Left ventricle myocardium inferior (tissue), 1 donor: ENCODE measurements at regions of chr19 and their contacts with region 1.

Region 1: DNA sequence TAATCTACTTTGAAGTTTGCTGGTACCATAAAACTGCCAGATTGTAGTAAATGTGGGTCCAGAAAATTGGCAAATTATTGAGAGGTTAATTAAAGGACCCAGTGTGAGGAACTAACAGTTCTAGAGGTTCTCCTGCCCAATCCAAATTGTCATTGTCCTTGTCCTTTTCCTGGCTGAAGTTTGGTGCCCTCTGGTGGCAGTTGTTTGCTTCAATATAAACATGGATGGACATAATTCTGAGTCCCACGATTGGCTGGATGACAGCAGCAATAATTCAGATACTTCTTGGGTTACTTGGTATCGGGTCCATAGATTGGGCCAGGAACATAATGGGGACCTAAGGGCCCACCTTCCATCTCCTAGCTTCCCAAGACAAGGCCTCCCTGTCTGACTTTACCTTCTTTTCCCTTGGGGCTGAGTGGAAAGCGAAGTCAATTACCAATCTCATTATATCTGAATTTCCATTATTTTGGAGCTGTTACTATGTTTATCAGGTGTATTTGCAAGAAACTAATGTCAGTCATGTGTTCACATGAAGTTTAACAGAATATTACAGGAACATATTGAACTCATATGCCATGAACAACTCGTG is 33.8 kb upstream of the GARRE1 start:
- DNase-seq: no peak
- H3K4me3 ChIP-seq: no peak overlapping the region
- H3K27ac ChIP-seq: no peak overlapping the region
- H3K4me1 ChIP-seq: peaks cover 6% of the 10 kb centered on the region
- H3K27me3 ChIP-seq: no peaks in the 10 kb centered on the region
- CTCF ChIP-seq: peak; percentile 77

Region 2: DNA sequence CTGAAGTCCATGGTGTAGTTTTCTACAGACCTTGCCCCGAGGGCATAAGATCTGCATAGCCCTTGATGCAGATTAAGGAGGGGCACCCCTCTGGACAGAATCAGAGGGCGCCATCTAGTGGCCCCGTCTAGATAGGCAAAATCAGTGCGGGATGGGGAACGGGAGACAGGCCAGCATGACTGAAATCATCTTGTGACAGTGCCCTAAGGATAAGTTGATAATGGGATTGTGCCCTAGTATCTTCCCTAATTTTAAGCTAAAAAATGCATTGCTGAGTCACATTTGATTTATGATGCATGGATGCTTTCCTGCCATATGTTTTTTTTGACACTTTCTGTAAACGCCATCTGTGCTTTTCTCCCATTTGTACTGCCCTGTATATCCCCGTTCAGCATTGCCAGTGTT is 125.4 kb after region 1 on chr19:
- intact Hi-C with region 1: loop called (anchors 10 kb)
- DNase-seq: peak; percentile 54
- H3K4me3 ChIP-seq: no peak overlapping the region
- H3K27ac ChIP-seq: no peak overlapping the region
- H3K4me1 ChIP-seq: peaks cover 5% of the 10 kb centered on the region
- H3K27me3 ChIP-seq: no peaks in the 10 kb centered on the region
- CTCF ChIP-seq: peak; percentile 86